ENCODE measurements at regions of chr17 and their contacts with region 1.

Region 1: DNA sequence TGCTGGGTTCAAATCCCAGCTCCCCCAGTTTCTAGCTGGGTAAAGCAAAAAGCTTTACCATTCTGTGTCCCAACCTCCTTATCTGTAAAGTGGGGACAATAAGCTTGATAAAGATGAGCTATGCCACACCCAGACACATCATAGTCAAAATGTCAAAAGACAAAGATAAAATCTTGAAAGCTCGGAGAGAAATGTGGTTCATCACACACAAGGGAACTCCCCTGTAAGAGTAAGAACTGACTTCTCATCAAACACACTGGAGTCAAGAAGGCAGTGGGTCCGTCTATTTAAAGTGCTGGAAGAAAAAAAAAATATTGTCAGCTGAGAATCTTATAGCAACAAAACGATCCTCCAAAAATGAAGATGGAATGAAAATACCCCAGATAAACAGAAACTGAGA is 25.3 kb downstream of the CACNG5 start:
- DNase-seq: no peak
- H3K4me3 ChIP-seq: no peak overlapping the region
- CTCF ChIP-seq: no peak

Region 2: DNA sequence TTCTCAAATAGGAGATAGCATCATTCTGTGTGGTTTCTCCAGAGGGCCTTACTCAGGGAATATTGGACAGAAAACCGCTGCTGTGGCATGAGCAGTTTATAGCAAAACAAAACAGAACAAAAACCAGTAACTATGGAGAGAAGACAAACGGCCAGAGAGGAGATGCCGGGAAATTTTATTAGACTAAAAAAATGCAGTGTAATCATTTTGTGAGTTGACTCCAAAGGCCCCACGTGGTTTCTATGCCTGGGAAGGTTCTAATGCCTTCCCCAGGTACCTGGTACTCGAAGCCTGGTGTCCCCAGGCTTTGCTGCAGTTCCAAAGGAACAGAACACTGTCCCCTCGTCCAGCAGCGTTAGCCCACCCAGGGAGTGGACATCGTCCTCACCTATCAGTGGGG is 38.2 kb before region 1 on chr17:
- in situ Hi-C with region 1: loop called (anchors 5 kb)
- DNase-seq: no peak
- H3K4me3 ChIP-seq: no peak overlapping the region
- CTCF ChIP-seq: no peak

Measured in astrocyte of the cerebellum (primary cell).